HepG2 (cell line): ENCODE measurements at regions of chr7 and their contacts with region 1.

Region 1: DNA sequence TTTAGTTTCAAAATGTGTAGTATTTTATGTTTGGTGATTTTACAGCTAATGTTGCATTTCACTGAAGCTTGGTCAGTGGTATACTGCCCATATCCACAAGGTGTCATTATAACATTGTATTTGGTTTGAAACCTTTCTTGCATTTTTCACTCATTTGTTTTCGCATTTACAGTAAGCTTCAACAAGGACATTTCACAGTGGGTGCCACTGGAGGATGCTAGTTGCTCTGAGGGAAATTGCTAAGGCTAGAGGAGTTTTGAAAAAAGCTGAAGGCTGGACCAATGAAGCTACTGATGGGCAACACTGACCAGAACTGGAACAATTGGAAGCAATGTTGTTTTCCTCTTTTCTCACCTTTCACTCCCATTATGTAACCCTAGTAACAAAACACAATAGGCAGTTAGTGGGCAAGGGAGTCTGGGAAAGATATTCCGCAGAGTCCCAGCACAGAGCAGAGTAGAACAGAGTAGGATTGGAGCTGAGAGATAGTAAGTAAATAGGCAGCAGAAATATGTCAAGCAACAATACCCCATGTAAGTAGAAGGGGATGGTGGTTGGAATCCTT is 23.6 kb upstream of the SRI start:
- DNase-seq: peak; percentile 21
- ATAC-seq: peak; percentile 76
- H3K4me3 ChIP-seq: no peak overlapping the region
- H3K27ac ChIP-seq: no peak overlapping the region
- H3K4me1 ChIP-seq: no peaks in the 10 kb centered on the region
- H3K27me3 ChIP-seq: no peaks in the 10 kb centered on the region
- CTCF ChIP-seq: peak; percentile 76
- EP300 ChIP-seq: no peak
- POLR2A ChIP-seq: no peak
- RAD21 ChIP-seq: peak; percentile 41; the same call in 1 of the 2 replicates

Region 2: DNA sequence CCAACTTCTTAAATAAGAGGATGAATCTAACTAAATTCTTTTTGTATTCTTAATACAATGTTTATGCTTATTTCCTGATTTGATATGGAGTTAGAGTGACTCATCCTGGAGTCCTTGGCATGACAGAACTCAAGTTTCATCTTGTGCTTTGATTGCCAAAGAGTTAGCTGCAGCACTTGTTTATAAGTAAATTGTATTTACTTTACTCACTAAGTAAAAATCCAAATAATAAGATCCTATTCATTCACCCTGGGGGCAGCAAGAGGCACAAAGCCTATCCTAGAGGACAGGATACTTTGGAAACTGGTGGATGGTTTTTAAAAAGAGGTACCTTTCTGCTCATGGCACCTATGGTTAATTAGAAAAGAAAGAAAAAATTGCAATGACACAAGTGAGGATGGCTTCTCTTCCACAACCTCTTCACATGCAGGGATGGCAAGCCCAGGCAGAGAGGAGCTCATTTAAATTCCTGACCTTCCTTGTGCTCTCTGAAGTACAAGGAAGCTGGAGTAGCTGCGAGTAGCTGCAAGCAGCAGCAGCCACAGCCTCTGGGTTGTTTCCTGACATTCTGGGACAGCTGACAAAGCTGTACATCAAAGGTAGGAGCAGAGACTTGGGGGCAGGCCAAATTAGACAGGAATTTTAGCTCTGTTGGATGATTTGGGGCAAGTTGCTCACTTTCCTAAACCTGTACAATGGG is 926.4 kb before region 1 on chr7:
- CTCF ChIA-PET with region 1: no interaction called
- POLR2A ChIA-PET with region 1: no interaction called
- in situ Hi-C with region 1: no loop called
- intact Hi-C with region 1: no loop called
- DNase-seq: peak; percentile 11
- ATAC-seq: no peak
- H3K4me3 ChIP-seq: no peak overlapping the region
- H3K27ac ChIP-seq: no peak overlapping the region
- H3K4me1 ChIP-seq: peaks cover 41% of the 10 kb centered on the region
- H3K27me3 ChIP-seq: no peaks in the 10 kb centered on the region
- CTCF ChIP-seq: no peak
- EP300 ChIP-seq: no peak
- POLR2A ChIP-seq: no peak
- RAD21 ChIP-seq: no peak

Region 3: DNA sequence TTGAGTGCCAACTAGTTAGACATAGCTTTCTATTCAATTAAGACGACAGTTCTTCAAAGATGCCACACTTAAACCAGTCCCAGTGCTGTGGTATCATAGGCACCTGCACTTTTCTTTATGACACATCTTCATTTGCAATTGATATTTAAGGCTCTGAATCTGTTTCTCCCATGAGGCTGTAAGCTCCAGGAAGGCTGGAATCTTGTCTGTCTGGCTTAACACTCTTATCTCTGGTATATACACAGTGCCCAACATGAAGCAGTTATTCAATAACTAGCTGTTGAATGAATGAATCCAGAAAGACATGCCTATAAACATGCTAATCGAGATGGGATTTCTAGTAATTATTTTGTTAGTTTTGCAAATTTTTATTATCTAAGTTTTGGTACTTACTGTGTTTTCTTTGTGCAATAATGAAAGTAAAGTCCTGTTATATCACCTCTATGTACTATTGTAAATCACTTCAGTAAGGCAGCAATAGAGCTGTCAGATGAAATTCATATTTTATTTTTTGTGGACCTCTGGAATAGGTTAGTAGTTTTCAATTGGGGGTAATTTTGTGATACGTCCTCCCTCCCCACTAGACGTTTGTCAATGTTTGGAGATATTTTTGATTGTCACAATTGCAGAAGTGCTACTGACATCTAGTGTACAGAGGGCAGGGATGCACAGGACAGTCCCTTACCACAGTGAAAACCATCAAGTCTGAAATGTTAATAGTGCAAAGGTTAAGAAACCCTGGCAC is 114.5 kb after region 1 on chr7:
- CTCF ChIA-PET with region 1: interaction called, 3 read pairs
- POLR2A ChIA-PET with region 1: no interaction called
- in situ Hi-C with region 1: no loop called
- intact Hi-C with region 1: loop called (anchors 1 kb)
- DNase-seq: peak; percentile 13
- ATAC-seq: peak; percentile 86
- H3K4me3 ChIP-seq: no peak overlapping the region
- H3K27ac ChIP-seq: no peak overlapping the region
- H3K4me1 ChIP-seq: peaks cover 14% of the 10 kb centered on the region
- H3K27me3 ChIP-seq: no peaks in the 10 kb centered on the region
- CTCF ChIP-seq: peak; percentile 55
- EP300 ChIP-seq: no peak
- POLR2A ChIP-seq: no peak
- RAD21 ChIP-seq: no peak

Region 4: DNA sequence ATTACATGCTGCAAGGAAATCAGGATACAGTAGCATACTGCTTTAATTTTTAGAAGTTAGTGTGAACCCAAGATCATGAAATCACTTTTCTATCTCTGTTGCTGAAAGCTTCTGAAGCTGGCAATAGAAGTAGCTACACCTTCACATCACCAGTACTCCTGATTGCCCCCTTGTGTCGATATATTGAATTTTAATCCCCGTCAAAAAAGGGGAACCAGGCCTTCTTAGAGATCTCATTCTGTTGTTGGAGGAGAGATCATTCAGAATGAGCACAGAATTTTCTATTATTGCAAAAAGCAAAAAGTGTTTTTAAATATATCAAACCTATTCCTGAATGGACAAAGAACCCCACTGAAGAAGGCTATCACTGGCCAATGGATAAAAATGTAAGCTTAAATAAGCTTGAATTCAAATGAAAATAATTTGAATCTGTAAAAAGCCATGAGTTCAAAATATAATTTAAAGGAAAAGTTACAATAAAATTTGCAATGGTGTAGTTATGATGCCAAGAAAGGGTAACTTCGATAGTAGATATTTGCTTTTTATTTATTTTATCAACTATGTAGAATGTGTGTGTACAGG is 591.8 kb after region 1 on chr7:
- CTCF ChIA-PET with region 1: interaction called, 7 read pairs
- POLR2A ChIA-PET with region 1: no interaction called
- in situ Hi-C with region 1: loop called (anchors 25 kb)
- intact Hi-C with region 1: loop called (anchors 1 kb)
- DNase-seq: peak; percentile 27
- ATAC-seq: peak; percentile 56; the same call in 2 of the 3 replicates
- H3K4me3 ChIP-seq: no peak overlapping the region
- H3K27ac ChIP-seq: no peak overlapping the region
- H3K4me1 ChIP-seq: no peaks in the 10 kb centered on the region
- H3K27me3 ChIP-seq: no peaks in the 10 kb centered on the region
- CTCF ChIP-seq: peak; percentile 50
- EP300 ChIP-seq: no peak
- POLR2A ChIP-seq: no peak
- RAD21 ChIP-seq: no peak

Region 5: DNA sequence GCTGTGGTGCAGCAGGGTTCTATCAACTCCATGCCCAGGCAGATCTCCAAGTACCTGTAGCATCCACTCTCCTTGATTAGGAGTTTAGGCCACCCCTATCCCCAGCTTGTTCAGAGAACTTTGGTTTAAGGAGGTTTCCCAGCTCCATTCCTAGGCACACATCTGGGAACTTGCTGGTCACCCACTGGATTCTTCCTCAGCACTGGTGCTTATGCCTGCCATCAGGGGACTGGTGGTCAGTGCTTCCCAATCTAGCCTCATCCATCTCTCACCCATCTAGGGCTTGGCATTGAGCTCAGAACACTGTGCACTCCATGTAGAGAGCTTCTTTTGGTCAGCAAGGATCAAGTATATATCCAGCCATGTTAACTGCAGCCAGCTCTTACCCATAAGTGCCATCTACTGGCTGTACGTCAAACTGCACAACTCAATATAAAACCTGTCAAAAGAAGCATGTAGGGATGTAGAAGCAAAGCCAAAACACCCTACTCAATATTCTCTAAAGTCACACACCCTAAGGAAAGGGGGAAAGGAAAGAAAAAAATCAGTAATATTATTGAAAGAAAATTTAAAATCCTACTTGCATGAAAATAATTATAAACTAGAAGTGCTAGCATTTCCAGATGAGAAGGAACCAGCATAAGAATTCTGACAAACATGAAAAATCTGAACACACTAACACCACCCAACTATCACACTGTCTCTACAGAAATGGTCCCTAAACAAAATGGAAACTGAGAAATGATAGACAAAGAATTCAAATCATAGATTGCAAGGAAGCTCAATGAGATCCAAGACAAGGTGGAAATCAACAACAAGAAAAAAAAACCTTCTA is 1379.6 kb after region 1 on chr7:
- CTCF ChIA-PET with region 1: interaction called, 7 read pairs
- POLR2A ChIA-PET with region 1: no interaction called
- in situ Hi-C with region 1: no loop called
- intact Hi-C with region 1: loop called (anchors 10 kb)
- DNase-seq: peak; percentile 41
- ATAC-seq: peak; percentile 86
- H3K4me3 ChIP-seq: no peak overlapping the region
- H3K27ac ChIP-seq: no peak overlapping the region
- H3K4me1 ChIP-seq: no peaks in the 10 kb centered on the region
- H3K27me3 ChIP-seq: no peaks in the 10 kb centered on the region
- CTCF ChIP-seq: peak; percentile 73
- EP300 ChIP-seq: no peak
- POLR2A ChIP-seq: no peak
- RAD21 ChIP-seq: peak; percentile 17; the same call in 1 of the 2 replicates